ENCODE measurements at regions of chr17 and their contacts with region 1.

Region 1: DNA sequence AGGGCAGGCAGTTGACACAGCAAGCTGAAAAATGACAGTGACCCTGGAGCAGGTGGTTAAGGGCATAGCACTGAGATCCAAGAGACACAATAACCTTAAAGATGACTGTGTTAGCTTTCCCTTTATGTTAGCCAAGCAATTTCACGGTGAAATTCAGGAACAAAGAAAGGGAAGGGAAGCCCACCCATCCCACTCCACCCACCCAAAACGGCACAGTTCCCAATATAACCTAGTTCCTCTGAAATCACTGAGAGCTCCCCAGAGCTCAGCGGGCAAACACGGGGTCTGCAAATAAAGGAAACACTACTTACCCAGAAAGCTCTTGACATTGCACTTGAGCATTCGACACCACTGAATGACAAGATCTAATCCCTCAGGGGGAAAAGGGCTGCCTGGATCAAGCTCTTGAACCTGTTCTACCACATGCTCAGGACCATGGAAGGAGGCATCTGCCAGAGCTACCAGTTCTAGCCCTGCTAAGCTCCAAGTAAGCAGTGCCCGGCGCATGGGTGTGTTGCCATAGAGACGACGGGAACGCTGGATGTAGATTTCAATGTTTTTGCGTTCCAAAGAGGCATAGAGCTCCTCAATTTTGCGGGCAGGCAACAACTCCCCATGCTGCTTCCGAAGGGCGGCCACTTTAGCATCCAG is 10.6 kb downstream of the BLTP2 start:
- DNase-seq: peak in 1 of 2 donors; percentile 65
- H3K4me3 ChIP-seq: no peak overlapping the region
- H3K27ac ChIP-seq: no peak overlapping the region
- H3K4me1 ChIP-seq: no peaks in the 10 kb centered on the region
- H3K27me3 ChIP-seq: no peaks in the 10 kb centered on the region
- CTCF ChIP-seq: no peak
- POLR2A ChIP-seq: no peak

Region 2: GRCh38 chr17:28029044-28029443 is 605.3 kb before region 1 on chr17:
- intact Hi-C with region 1: loop called (anchors 5 kb)
- DNase-seq: no peak
- H3K4me3 ChIP-seq: no peak overlapping the region
- H3K27ac ChIP-seq: no peak overlapping the region
- H3K4me1 ChIP-seq: no peaks in the 10 kb centered on the region
- H3K27me3 ChIP-seq: no peaks in the 10 kb centered on the region
- CTCF ChIP-seq: no peak
- POLR2A ChIP-seq: no peak

Region 3: GRCh38 chr17:28563475-28563874 is 70.9 kb before region 1 on chr17:
- intact Hi-C with region 1: loop called (anchors 2 kb)
- DNase-seq: no peak
- H3K4me3 ChIP-seq: no peak overlapping the region
- H3K27ac ChIP-seq: no peak overlapping the region
- H3K4me1 ChIP-seq: no peaks in the 10 kb centered on the region
- H3K27me3 ChIP-seq: no peaks in the 10 kb centered on the region
- CTCF ChIP-seq: no peak
- POLR2A ChIP-seq: no peak

Measured in breast epithelium (tissue), 4 donors.